Vagina (tissue), 2 donors: ENCODE measurements at regions of chr3 and their contacts with region 1.

Region 1: DNA sequence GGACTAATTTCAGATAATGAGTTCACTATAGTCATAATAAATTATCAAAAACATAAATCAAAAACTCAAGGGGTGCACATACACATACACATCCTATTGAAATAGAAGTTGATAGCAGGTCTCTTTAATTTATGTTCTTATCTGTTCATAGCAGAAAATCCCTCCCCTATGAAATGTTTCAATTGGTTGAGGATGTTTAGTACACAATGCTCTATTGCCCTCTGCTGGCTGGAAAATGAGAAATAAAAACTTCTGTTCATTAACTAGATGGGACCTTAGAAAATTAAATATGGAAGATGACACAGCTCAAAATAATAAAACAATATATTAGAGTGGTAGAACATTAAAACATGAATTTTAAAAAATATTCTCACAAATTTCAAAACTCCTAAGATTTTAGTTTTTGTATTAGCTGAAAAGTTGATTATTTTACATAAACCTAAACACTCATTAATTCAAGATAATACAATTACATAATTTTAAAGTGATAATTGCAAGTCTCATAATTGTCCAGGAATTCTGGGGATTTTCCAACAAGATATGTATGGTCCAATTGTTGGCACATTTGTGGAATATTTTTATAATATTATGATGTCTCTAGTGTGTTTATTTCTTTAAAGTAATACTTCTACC is 735.0 kb downstream of the ROBO1 start:
- DNase-seq: no peak
- H3K4me3 ChIP-seq: no peak overlapping the region
- H3K27ac ChIP-seq: no peak overlapping the region
- H3K4me1 ChIP-seq: no peaks in the 10 kb centered on the region
- H3K27me3 ChIP-seq: no peaks in the 10 kb centered on the region
- CTCF ChIP-seq: peak in 2 of 3 experiments; percentile 59 to 60
- POLR2A ChIP-seq: no peak

Region 2: GRCh38 chr3:78666470-78666800 is 366.4 kb before region 1 on chr3:
- intact Hi-C with region 1: loop called (anchors 5 kb)
- DNase-seq: no peak
- H3K4me3 ChIP-seq: no peak overlapping the region
- H3K27ac ChIP-seq: no peak overlapping the region
- H3K4me1 ChIP-seq: peaks cover 22% of the 10 kb centered on the region
- H3K27me3 ChIP-seq: no peaks in the 10 kb centered on the region
- CTCF ChIP-seq: no peak
- POLR2A ChIP-seq: no peak

Region 3: GRCh38 chr3:78994174-78995027 is 38.4 kb before region 1 on chr3:
- intact Hi-C with region 1: no loop called
- DNase-seq: no peak
- H3K4me3 ChIP-seq: no peak overlapping the region
- H3K27ac ChIP-seq: no peak overlapping the region
- H3K4me1 ChIP-seq: no peaks in the 10 kb centered on the region
- H3K27me3 ChIP-seq: no peaks in the 10 kb centered on the region
- CTCF ChIP-seq: no peak
- POLR2A ChIP-seq: no peak

Region 4: GRCh38 chr3:79968418-79968817 is 935.6 kb after region 1 on chr3:
- intact Hi-C with region 1: no loop called
- DNase-seq: no peak
- H3K4me3 ChIP-seq: no peak overlapping the region
- H3K27ac ChIP-seq: no peak overlapping the region
- H3K4me1 ChIP-seq: no peaks in the 10 kb centered on the region
- H3K27me3 ChIP-seq: no peaks in the 10 kb centered on the region
- CTCF ChIP-seq: no peak
- POLR2A ChIP-seq: no peak